CD8-positive, alpha-beta T cell (primary cell): ENCODE measurements at regions of chr16 and their contacts with region 1.

Region 1: GRCh38 chr16:58684354-58685083 is at the start of gene SLC38A7:
- DNase-seq: peak; percentile 43 to 81 (median 69)
- ATAC-seq: peak; percentile 88
- H3K4me3 ChIP-seq: peak within 1 kb of the TSS; percentile 76 to 95
- H3K4me3 Mint-ChIP-seq: peak within 1 kb of the TSS; percentile 91
- H3K27ac ChIP-seq: peak within 1 kb of the TSS; percentile 47 to 51
- H3K27ac Mint-ChIP-seq: peak within 1 kb of the TSS; percentile 80
- H3K4me1 ChIP-seq: peaks cover 19% of the 10 kb centered on the region
- H3K4me1 Mint-ChIP-seq: peaks cover 22% of the 10 kb centered on the region
- H3K27me3 ChIP-seq: no peaks in the 10 kb centered on the region
- H3K27me3 Mint-ChIP-seq: no peaks in the 10 kb centered on the region
- CTCF ChIP-seq: no peak
- total RNA-seq, gene SLC38A7: 3.7 to 4.6 TPM

Region 2: GRCh38 chr16:58515125-58515870 is 169.2 kb before region 1 on chr16 and contains the start of gene SETD6:
- CTCF ChIA-PET with region 1: no interaction called
- POLR2A ChIA-PET with region 1: no interaction called
- intact Hi-C with region 1: loop called in 1 of 2 experiments (anchors 5 kb)
- DNase-seq: peak; percentile 25 to 81 (median 68)
- ATAC-seq: peak; percentile 59
- H3K4me3 ChIP-seq: peak within 1 kb of the TSS; percentile 72 to 92
- H3K4me3 Mint-ChIP-seq: peak within 1 kb of the TSS; percentile 90
- H3K27ac ChIP-seq: peak within 1 kb of the TSS; percentile 64 to 73
- H3K27ac Mint-ChIP-seq: peak within 1 kb of the TSS; percentile 80
- H3K4me1 ChIP-seq: peaks cover 13% of the 10 kb centered on the region
- H3K4me1 Mint-ChIP-seq: peaks cover 20% of the 10 kb centered on the region
- H3K27me3 ChIP-seq: no peaks in the 10 kb centered on the region
- H3K27me3 Mint-ChIP-seq: no peaks in the 10 kb centered on the region
- CTCF ChIP-seq: no peak
- total RNA-seq, gene SETD6: 17.3 to 17.4 TPM

Region 3: GRCh38 chr16:58733671-58734458 is 49.3 kb after region 1 on chr16 and contains the start of gene GOT2:
- CTCF ChIA-PET with region 1: interaction called, 7 read pairs
- POLR2A ChIA-PET with region 1: no interaction called
- intact Hi-C with region 1: loop called in 1 of 2 experiments (anchors 2 kb)
- DNase-seq: peak; percentile 63 to 90 (median 77)
- ATAC-seq: peak; percentile 97
- H3K4me3 ChIP-seq: peak within 1 kb of the TSS; percentile 73 to 82
- H3K4me3 Mint-ChIP-seq: peak within 1 kb of the TSS; percentile 98
- H3K27ac ChIP-seq: peak within 1 kb of the TSS; percentile 44 to 71
- H3K27ac Mint-ChIP-seq: peak within 1 kb of the TSS; percentile 91
- H3K4me1 ChIP-seq: peaks cover 21% of the 10 kb centered on the region
- H3K4me1 Mint-ChIP-seq: peaks cover 41% of the 10 kb centered on the region
- H3K27me3 ChIP-seq: no peaks in the 10 kb centered on the region
- H3K27me3 Mint-ChIP-seq: no peaks in the 10 kb centered on the region
- CTCF ChIP-seq: peak; percentile 81
- total RNA-seq, gene GOT2: 14.0 to 15.2 TPM

Region 4: GRCh38 chr16:59411961-59412841 is 727.7 kb after region 1 on chr16:
- CTCF ChIA-PET with region 1: no interaction called
- POLR2A ChIA-PET with region 1: no interaction called
- intact Hi-C with region 1: no loop called
- DNase-seq: no peak
- ATAC-seq: no peak
- H3K4me3 ChIP-seq: no peak overlapping the region
- H3K4me3 Mint-ChIP-seq: no peak overlapping the region
- H3K27ac ChIP-seq: no peak overlapping the region
- H3K27ac Mint-ChIP-seq: no peak overlapping the region
- H3K4me1 ChIP-seq: no peaks in the 10 kb centered on the region
- H3K4me1 Mint-ChIP-seq: no peaks in the 10 kb centered on the region
- H3K27me3 ChIP-seq: no peaks in the 10 kb centered on the region
- H3K27me3 Mint-ChIP-seq: no peaks in the 10 kb centered on the region
- CTCF ChIP-seq: no peak